ENCODE measurements at regions of chr9 and their contacts with region 1.

Region 1: DNA sequence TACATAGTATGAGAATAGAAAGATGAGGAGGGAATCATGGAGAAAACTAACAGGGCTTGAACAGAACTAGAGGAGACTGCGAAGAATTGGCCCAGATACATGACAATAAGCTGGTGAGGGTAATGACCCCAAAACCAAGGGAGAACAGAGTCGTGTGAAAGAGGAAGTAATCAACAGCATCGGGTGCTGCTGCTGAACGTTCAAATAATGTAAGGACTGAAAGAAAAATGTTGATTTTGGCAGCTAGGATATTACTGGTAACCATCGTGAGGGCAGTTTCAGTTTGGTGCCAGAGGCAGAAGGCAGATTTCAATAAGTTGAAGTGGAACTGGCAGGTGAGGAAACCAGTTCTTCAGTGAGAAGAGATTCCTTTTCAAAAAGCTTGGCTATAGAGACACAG is 66.8 kb upstream of the SMC2 start:
- DNase-seq: no peak
- H3K4me3 ChIP-seq: no peak overlapping the region
- H3K27ac ChIP-seq: no peak overlapping the region
- H3K4me1 ChIP-seq: no peaks in the 10 kb centered on the region
- H3K27me3 ChIP-seq: no peaks in the 10 kb centered on the region
- CTCF ChIP-seq: no peak
- EP300 ChIP-seq: no peak
- POLR2A ChIP-seq: no peak

Region 2: DNA sequence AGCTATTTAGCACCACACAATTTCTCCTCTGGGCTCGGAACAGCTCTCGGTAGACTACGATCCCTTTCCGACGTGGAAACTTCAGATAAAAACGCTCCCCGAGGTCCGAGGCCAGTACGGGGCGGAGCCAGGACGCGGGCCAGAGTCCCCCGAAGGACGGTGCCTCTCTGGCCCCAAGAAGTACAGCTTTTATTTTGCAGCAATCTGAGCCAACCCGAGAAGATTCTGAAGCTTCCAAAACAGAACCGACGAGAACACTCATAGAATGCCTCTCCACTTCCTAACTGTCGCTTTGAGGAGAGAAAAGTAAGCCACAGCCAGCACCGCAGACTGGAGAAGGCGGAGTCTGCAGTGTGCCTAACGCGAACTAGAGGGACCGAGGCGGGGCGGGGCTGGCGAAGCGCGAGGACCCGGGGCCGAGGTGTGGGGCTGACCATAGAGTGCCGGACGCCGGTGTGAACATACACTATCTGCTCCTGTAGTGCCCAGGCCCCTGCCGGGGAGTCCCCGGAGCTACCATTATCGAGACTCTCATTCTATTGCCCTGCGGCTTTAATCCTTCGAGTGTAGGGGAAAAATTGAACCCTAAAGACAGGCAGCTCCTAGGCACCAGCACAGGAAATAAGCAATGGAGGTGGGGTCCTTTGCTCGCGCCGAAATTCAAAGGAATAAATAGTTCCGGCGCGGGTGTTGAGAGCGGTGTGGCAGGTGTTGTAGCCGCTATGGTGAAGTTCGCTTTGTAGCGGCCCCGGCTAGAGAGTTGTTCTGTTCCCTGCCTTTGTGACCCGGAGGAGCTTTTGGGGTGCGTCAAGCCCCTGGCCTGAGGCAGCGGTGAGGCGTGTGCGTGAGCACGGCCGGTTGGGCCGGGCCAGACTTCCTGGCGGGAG is 66.6 kb after region 1 on chr9 and contains the start of gene SMC2:
- intact Hi-C with region 1: loop called (anchors 2 kb)
- DNase-seq: peak; percentile 98
- H3K4me3 ChIP-seq: peak within 1 kb of the TSS; percentile 59 to 90 (median 74)
- H3K27ac ChIP-seq: peak within 1 kb of the TSS; percentile 90 to 94 (median 93)
- H3K4me1 ChIP-seq: peaks cover 22 to 56% (median 50%) of the 10 kb centered on the region in 4 donors
- H3K27me3 ChIP-seq: no peaks in the 10 kb centered on the region
- CTCF ChIP-seq: peak in 1 of 3 experiments; percentile 6
- EP300 ChIP-seq: no peak
- POLR2A ChIP-seq: no peak
- total RNA-seq, gene SMC2: 9.8 to 11.5 (median 10.1) TPM

Region 3: DNA sequence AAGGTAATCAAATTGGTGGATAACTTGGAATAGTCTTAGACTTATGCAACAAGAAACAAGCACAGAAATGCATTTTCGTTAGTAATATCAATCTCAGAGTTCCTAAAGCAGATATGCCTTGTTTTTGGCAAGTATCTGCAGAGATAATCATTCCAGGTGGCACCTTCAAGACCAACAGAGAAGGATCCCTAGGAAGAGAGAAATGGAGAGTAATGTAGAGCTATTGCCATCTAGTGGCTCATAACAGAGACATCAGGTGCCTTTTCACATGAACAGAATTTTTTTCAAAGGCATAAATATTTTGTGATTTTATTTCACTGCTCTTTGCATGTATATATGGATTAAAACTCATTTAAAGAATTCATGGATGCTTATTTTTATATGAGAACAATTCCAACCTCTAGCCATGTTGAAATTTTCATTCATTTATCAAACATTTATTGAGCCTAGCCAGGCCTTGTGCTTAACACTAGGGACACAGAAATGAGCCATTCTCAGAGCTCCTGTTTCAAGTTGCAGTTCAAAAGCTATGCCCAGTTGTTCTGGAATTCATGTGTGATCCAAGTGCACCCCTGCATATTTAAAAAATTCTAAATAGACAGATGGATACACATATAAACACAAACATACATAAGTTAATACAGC is 359.3 kb after region 1 on chr9:
- intact Hi-C with region 1: loop called (anchors 5 kb)
- DNase-seq: no peak
- H3K4me3 ChIP-seq: no peak overlapping the region
- H3K27ac ChIP-seq: no peak overlapping the region
- H3K4me1 ChIP-seq: no peaks in the 10 kb centered on the region
- H3K27me3 ChIP-seq: no peaks in the 10 kb centered on the region
- CTCF ChIP-seq: peak; percentile 30 to 74 (median 58)
- EP300 ChIP-seq: no peak
- POLR2A ChIP-seq: no peak

Measured in esophagus muscularis mucosa (tissue), 4 donors.